Activated B cell treated with CpG ODN at 0.5 μM for 24 hours (primary cell): ENCODE measurements at regions of chr4 and their contacts with region 1.

Region 1: GRCh38 chr4:184263910-184264732 is 46.4 kb upstream of the ENPP6 start:
- DNase-seq: peak; percentile 80
- ATAC-seq: peak; percentile 20
- H3K4me3 Mint-ChIP-seq: peak overlapping the region; percentile 25
- H3K27ac Mint-ChIP-seq: peak overlapping the region; percentile 60
- H3K4me1 Mint-ChIP-seq: peaks cover 48% of the 10 kb centered on the region
- H3K27me3 Mint-ChIP-seq: no peaks in the 10 kb centered on the region
- CTCF ChIP-seq: peak; percentile 71

Region 2: GRCh38 chr4:184205243-184205642 is 58.9 kb before region 1 on chr4:
- CTCF ChIA-PET with region 1: no interaction called
- POLR2A ChIA-PET with region 1: no interaction called
- intact Hi-C with region 1: no loop called
- DNase-seq: no peak
- ATAC-seq: no peak
- H3K4me3 Mint-ChIP-seq: no peak overlapping the region
- H3K27ac Mint-ChIP-seq: no peak overlapping the region
- H3K4me1 Mint-ChIP-seq: no peaks in the 10 kb centered on the region
- H3K27me3 Mint-ChIP-seq: peaks cover 34% of the 10 kb centered on the region
- CTCF ChIP-seq: no peak

Region 3: DNA sequence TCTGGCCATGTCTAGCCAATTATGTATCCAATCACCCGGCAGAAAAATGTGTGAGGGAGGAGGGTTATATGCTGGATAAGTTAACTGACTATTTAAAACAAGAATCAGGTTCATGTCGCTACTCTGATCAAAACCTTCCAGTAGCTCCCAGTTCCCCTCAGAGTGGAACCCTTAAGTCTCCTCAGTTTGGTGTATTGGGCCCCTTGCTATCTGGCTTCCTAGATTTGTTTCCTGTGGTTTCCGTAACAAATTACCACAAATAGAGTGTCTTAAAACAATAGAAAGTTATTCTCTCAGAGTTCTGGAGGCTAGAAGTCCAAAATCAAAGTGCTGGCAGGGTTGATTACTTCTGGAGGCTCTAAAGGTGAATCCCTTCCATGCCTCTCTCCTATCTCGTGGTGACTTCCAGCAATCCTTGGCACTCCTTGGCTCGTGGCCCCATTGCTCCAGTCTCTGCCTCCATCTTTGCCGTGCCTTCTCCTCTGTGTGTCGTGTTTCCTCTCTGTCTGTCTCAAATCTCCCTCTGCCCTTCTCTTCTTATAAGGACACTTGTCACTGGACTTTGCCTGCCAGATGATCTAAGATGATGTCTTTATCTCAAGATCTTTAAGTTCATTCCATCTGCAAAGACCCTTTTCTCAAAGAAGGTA is 35.9 kb before region 1 on chr4:
- CTCF ChIA-PET with region 1: no interaction called
- POLR2A ChIA-PET with region 1: no interaction called
- intact Hi-C with region 1: no loop called
- DNase-seq: no peak
- ATAC-seq: no peak
- H3K4me3 Mint-ChIP-seq: no peak overlapping the region
- H3K27ac Mint-ChIP-seq: no peak overlapping the region
- H3K4me1 Mint-ChIP-seq: peaks cover 9% of the 10 kb centered on the region
- H3K27me3 Mint-ChIP-seq: peaks cover 39% of the 10 kb centered on the region
- CTCF ChIP-seq: no peak

Region 4: DNA sequence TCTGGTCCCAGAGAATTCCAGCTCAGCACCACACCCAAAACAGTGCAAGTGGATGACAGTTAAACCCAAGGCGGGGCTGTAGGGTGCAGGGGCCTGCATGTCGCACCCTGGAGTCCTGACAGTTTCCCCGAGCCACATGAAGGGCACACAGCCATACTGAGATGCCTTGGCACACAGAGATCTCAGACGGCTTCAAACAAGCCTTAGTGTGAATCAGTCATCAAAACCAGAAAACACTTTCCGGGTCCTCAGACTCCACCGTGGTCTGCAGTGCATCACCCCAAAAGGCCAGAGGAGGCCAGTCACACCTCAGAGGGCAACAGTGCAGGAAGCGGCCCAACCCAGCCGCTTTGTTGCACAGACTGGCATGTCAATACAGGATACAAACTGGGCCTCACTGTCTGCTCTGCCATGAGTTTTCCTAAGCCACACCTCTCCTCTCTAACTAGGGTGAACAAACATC is 18.2 kb after region 1 on chr4:
- CTCF ChIA-PET with region 1: interaction called, 119 read pairs
- POLR2A ChIA-PET with region 1: interaction called, 177 read pairs
- intact Hi-C with region 1: loop called (anchors 1 kb)
- DNase-seq: no peak
- ATAC-seq: peak; percentile 40
- H3K4me3 Mint-ChIP-seq: peak overlapping the region; percentile 32
- H3K27ac Mint-ChIP-seq: peak overlapping the region; percentile 83
- H3K4me1 Mint-ChIP-seq: peaks cover 66% of the 10 kb centered on the region
- H3K27me3 Mint-ChIP-seq: no peaks in the 10 kb centered on the region
- CTCF ChIP-seq: no peak

Region 5: GRCh38 chr4:184329659-184330400 is 65.7 kb after region 1 on chr4:
- CTCF ChIA-PET with region 1: interaction called, 15 read pairs
- POLR2A ChIA-PET with region 1: interaction called, 66 read pairs
- intact Hi-C with region 1: loop called (anchors 1 kb)
- DNase-seq: no peak
- ATAC-seq: peak; percentile 26
- H3K4me3 Mint-ChIP-seq: peak overlapping the region; percentile 47
- H3K27ac Mint-ChIP-seq: peak overlapping the region; percentile 97
- H3K4me1 Mint-ChIP-seq: peaks cover 78% of the 10 kb centered on the region
- H3K27me3 Mint-ChIP-seq: no peaks in the 10 kb centered on the region
- CTCF ChIP-seq: no peak

Region 6: DNA sequence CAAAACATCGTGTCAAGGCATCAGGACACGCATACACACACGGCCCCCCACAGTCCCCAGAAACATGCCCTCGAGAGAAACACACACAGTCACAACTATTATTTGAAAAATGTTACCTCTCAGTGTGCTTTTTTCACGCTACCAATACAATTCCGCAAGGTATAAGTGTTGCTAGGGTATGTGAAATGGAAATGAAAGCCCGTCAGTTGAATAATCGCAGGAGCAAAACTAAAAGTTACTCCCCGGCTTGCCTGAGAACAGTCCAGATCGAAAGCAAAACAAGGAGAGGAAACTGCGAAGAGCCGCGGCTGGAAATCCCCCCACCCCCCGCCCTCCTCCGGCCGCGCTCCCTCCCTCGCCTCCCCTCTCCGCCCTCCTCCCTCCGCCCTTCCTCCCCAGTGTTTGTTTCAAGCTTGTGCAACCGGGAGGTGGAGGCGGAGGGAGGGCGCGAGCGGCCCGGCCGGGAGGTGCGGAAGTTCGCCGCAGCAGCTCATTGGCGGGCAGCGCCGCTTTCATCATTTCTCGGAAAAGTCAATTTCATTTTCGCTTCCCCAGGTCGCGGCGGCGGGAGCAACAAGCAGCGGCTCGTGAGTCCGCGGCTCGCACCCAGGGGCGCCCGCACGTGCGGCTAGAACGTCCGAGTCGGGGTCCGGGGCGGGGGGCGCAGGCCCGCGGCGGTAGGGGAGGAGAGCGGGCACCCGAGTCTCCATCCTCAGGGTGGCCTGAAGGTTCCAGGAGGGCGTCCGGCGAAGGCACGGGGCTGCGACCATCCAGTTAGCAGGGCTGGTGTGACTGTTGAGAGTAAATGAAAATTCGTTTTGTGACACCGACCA is 210.4 kb after region 1 on chr4 and contains the start of gene IRF2:
- CTCF ChIA-PET with region 1: interaction called, 13 read pairs
- POLR2A ChIA-PET with region 1: interaction called, 101 read pairs
- intact Hi-C with region 1: loop called (anchors 1 kb)
- DNase-seq: peak; percentile 86
- ATAC-seq: peak; percentile 80
- H3K4me3 Mint-ChIP-seq: peak within 1 kb of the TSS; percentile 94
- H3K27ac Mint-ChIP-seq: peak within 1 kb of the TSS; percentile 96
- H3K4me1 Mint-ChIP-seq: peaks cover 63% of the 10 kb centered on the region
- H3K27me3 Mint-ChIP-seq: no peaks in the 10 kb centered on the region
- CTCF ChIP-seq: no peak
- total RNA-seq, gene IRF2: 65.5 and 66.2 TPM in 2 replicates

Region 7: DNA sequence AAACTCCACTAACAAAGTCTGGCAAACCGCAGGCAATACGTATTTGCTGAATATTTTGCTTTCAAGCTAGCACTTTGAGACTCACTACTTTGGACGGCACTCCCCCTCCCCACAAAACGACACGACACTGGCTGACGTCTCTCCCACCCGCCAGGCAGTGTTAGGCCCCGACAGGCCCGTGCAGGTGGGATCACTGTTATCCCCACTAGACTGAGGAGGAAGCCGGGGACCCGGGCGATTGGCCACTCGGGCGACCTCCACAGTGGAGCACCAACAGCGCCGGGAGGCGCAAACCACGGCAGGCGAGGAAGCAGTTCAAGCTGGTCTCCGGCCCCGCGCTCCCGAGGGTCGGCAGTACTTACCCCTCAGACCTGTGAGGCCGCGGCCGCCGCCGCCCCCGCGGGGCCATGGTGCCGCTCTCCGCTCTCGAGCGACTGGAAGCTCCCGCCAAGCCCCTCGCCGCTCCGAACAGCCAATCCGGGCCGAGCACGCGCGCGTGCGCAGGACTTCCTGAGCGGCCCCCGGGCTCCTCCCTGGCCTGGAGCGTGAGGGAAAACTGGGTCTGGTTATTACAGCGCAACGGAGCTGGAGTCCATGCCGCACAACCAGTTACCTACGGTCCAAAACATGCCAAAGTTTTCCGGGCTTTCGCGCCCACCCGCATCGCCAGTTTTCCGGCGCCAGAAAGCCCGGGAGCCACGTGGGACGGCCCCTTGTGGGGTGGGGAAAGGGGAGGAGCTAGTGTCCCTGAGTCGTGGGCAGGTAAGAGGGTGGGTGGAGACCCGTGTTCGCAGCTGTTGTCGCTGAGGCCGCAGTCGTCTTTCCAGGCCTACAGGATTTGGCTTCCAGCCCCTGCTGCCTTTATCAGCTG is 469.8 kb after region 1 on chr4 and contains the start of gene CENPU:
- CTCF ChIA-PET with region 1: interaction called, 8 read pairs
- POLR2A ChIA-PET with region 1: interaction called, 11 read pairs
- intact Hi-C with region 1: loop called (anchors 1 kb)
- DNase-seq: peak; percentile 95
- ATAC-seq: peak; percentile 96
- H3K4me3 Mint-ChIP-seq: peak within 1 kb of the TSS; percentile 88
- H3K27ac Mint-ChIP-seq: peak within 1 kb of the TSS; percentile 85
- H3K4me1 Mint-ChIP-seq: peaks cover 19% of the 10 kb centered on the region
- H3K27me3 Mint-ChIP-seq: no peaks in the 10 kb centered on the region
- CTCF ChIP-seq: no peak
- total RNA-seq, gene CENPU: 7.0 and 7.1 TPM in 2 replicates

Region 8: DNA sequence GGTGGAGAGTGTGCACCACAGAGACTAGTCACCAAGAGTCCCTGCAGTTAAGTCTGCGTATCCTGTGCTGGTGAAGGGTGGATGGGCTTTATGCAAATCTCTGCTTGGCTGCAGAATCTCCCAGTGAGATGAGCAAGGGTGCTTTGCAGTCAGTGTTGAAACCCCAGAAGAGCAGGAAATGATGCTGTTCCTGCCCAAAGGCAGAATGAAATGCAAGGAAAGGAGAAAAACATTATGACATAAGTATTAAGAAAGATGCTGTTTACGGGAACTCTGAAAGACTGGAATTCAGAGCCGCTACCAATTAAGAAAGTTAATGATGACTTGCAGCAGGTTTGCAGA is 587.0 kb after region 1 on chr4:
- CTCF ChIA-PET with region 1: no interaction called
- POLR2A ChIA-PET with region 1: no interaction called
- intact Hi-C with region 1: loop called (anchors 1 kb)
- DNase-seq: no peak
- ATAC-seq: peak; percentile 71
- H3K4me3 Mint-ChIP-seq: no peak overlapping the region
- H3K27ac Mint-ChIP-seq: no peak overlapping the region
- H3K4me1 Mint-ChIP-seq: peaks cover 38% of the 10 kb centered on the region
- H3K27me3 Mint-ChIP-seq: no peaks in the 10 kb centered on the region
- CTCF ChIP-seq: no peak

Region 9: DNA sequence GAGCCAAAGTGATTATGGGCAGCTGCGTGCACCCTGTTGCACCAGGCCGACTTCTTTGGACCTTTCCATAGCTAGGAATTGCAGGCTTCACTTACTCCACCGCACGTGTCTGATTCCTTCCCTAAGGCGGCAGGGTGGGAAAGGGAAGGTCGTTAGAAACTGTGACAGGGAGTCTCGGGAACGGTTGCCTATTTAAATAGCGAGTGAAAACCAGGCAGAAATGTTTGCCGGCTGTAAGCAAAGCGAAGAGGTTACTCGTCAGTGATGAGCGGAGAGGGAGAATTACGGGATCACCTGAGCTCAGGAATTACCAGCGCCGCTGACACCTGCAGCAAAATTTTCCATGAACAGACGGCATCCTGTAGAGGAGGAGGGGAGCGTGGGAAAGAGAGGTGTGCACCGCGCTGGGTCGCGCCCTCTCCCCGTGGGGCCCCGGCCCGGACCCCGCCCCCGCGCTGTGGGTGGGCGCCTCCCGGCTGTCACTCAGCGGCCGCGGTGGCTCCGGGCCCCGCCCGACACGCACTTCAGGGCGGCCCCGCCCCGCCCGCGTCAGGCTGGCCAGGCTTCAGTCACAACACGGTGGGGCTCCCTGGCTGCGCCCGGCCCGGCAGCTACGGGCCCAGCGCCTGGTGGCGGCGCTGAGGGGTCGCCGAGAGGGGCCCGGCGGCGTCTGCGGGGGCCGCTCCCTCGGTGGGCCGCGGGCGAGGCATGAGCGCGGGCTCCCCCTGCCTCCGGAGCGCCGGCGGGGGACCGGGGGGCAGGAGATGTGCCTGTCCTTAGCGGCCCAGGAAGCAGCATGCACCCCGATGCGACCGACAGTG is 945.1 kb after region 1 on chr4 and contains the start of gene SNX25:
- CTCF ChIA-PET with region 1: no interaction called
- POLR2A ChIA-PET with region 1: no interaction called
- intact Hi-C with region 1: loop called (anchors 5 kb)
- DNase-seq: peak; percentile 94
- ATAC-seq: peak; percentile 83
- H3K4me3 Mint-ChIP-seq: peak within 1 kb of the TSS; percentile 95
- H3K27ac Mint-ChIP-seq: peak within 1 kb of the TSS; percentile 94
- H3K4me1 Mint-ChIP-seq: peaks cover 63% of the 10 kb centered on the region
- H3K27me3 Mint-ChIP-seq: no peaks in the 10 kb centered on the region
- CTCF ChIP-seq: no peak
- total RNA-seq, gene SNX25: 53.1 and 53.7 TPM in 2 replicates